Activated CD4-positive, alpha-beta memory T cell treated with anti-CD3 and anti-CD28 coated beads, Interleukin-2, amount 10 ng/mL, durations not matched to agents 7 days and 5 days (primary cell): ENCODE measurements at regions of chr6 and their contacts with region 1.

Region 1: GRCh38 chr6:30600451-30600961 is 16.5 kb downstream of the PPP1R10 start:
- DNase-seq: no peak
- H3K4me3 Mint-ChIP-seq: no peak overlapping the region
- H3K27ac Mint-ChIP-seq: no peak overlapping the region
- H3K4me1 Mint-ChIP-seq: peaks cover 22% of the 10 kb centered on the region
- H3K27me3 Mint-ChIP-seq: no peaks in the 10 kb centered on the region

Region 2: DNA sequence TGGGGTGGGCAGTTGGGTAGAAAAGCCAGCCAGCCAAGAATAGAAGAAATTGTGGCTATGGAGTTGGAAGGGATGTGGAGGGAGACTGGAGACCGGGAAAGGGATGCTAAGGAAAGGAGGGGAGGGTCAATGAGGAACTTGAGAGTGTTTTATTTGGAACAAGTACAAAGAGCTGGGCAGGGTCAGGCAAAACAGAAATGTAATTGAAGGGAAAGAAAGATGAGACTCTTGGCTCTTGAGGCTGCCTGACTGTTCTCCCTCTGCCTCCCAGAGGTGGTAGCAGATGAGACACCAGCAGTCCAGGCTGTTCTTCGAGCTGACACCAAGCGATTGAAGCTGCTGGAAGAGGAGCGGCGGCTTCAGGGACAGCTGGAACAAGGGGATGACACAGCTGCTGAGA is 16.6 kb before region 1 on chr6:
- CTCF ChIA-PET with region 1: interaction called, 25 read pairs
- POLR2A ChIA-PET with region 1: interaction called, 8 read pairs
- DNase-seq: no peak
- H3K4me3 Mint-ChIP-seq: no peak overlapping the region
- H3K27ac Mint-ChIP-seq: no peak overlapping the region
- H3K4me1 Mint-ChIP-seq: no peaks in the 10 kb centered on the region
- H3K27me3 Mint-ChIP-seq: no peaks in the 10 kb centered on the region